WTC11 (cell line): ENCODE measurements at regions of chr16 and their contacts with region 1.

Region 1: GRCh38 chr16:56311208-56312027 is 113.9 kb downstream of the AMFR start:
- DNase-seq: peak; percentile 37
- ATAC-seq: peak; percentile 93
- H3K4me3 Mint-ChIP-seq: no peak overlapping the region
- H3K27ac Mint-ChIP-seq: no peak overlapping the region
- H3K4me1 Mint-ChIP-seq: peaks cover 2% of the 10 kb centered on the region; the same call in 1 of the 2 replicates
- H3K27me3 Mint-ChIP-seq: no peaks in the 10 kb centered on the region
- CTCF ChIP-seq: no peak

Region 2: DNA sequence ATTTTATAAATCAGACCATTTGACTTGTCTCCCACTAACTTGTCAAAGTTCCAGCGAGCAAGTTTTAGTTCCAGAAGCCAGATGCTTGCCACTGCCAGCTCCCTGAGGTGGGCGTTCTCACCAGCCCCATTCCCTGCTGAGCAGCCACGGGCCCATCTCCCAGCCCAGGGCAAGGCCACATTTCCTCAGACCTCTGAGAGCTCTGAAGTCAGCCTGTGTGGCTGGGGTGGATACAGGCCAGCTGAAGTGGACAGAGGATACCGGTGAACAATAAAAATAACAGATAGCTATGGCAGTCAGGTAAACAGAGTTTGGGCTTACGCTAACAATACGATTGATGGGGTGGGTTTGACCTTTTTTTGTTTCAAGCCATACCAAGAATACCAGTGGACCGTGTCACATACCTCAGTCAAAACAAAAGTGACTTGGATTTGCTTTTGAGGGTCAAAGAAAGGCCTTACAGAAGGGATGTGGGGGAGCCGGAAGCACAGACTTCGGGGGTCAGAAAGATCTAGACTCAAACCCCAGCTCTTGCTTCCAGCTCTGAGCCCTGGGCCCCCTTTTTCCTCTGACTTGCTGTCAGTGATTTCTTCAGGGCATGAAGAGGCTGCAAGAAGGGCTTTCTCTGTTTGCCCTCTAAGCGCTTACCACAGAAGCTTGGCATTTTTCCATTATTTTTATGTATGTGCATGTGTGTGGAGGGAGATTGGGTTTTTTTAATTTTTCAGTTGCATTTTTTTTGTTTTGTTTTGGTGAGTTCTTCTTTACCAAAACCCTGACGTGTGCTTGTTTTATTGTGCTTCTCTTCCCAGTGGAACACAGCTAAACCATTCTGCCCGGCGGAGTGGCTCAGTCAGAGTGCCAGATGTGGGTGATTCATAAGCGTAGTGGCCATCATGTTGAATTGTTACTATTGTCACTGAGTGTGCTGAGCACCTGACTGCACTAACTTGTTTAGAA is 10.2 kb before region 1 on chr16:
- CTCF ChIA-PET with region 1: interaction called, 36 read pairs
- POLR2A ChIA-PET with region 1: no interaction called
- DNase-seq: no peak
- ATAC-seq: no peak
- H3K4me3 Mint-ChIP-seq: no peak overlapping the region
- H3K27ac Mint-ChIP-seq: no peak overlapping the region
- H3K4me1 Mint-ChIP-seq: peaks cover 28% of the 10 kb centered on the region
- H3K27me3 Mint-ChIP-seq: peaks cover 10% of the 10 kb centered on the region
- CTCF ChIP-seq: no peak